Astrocyte of the cerebellum (primary cell): ENCODE measurements at regions of chr22 and their contacts with region 1.

Region 1: GRCh38 chr22:17164392-17165024 is 5.4 kb upstream of the HDHD5 start:
- DNase-seq: no peak
- H3K4me3 ChIP-seq: no peak overlapping the region
- CTCF ChIP-seq: peak; percentile 31

Region 2: GRCh38 chr22:17117890-17118289 is 46.6 kb before region 1 on chr22:
- in situ Hi-C with region 1: no loop called
- DNase-seq: no peak
- H3K4me3 ChIP-seq: no peak overlapping the region
- CTCF ChIP-seq: no peak

Region 3: DNA sequence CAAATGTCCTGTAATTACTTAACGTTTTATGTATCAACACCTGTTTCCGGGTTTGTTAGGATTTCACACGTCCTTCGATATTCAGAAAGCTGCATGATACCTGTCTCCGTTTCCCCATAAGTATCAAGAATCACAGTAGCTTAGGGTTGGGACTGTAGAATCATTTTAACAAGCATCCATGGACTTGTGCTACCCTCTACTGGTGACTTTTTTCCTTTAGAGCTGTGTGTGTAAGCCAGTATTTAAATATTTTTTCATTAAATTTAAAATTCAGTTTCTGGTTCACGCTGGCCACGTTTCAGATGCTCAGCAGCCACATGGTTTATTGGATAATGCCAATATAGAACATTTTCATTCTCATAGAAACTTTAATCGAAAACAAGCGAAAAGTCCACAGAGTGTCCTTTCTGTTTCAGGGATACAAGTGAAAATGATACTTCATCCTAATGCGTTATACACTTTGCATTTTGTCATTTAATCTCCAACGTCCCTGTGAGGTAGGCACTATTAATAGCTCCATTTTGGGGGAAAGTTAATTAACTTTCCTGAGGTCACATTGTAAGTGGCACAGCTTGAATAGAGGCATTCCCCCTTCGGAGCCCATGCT is 337.3 kb after region 1 on chr22:
- in situ Hi-C with region 1: loop called (anchors 10 kb)
- DNase-seq: peak; percentile 75
- H3K4me3 ChIP-seq: no peak overlapping the region
- CTCF ChIP-seq: peak; percentile 51